ENCODE measurements at regions of chr16 and their contacts with region 1.

Region 1: DNA sequence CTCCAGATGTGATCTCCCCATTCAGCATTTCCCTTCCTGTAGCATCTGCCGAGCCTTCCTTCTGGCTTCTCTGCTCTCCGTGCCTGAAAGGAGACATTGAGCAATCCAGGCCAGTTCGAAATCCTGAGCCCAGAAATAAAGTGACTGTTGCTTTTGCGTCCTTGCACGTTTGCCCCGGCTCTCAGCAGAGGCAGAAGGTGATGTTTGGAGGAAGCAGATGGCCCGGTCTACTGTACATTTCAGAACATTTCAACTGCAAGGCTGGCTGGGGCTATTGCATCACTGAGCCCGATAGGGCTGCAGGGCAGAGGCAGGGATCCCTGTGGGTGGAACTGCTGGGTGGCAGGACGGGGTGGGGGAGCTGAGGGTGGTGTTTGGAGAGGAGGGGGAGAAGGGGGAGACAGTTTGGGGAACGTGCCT is 29.4 kb downstream of the IRF8 start:
- DNase-seq: peak; percentile 53
- ATAC-seq: peak; percentile 32
- H3K4me3 ChIP-seq: no peak overlapping the region
- H3K4me3 Mint-ChIP-seq: peak overlapping the region; percentile 72
- H3K27ac ChIP-seq: no peak overlapping the region
- H3K27ac Mint-ChIP-seq: peak overlapping the region; percentile 71
- H3K4me1 ChIP-seq: peaks cover 60 to 74% of the 10 kb centered on the region in 2 donors
- H3K4me1 Mint-ChIP-seq: peaks cover 82% of the 10 kb centered on the region
- H3K27me3 ChIP-seq: no peaks in the 10 kb centered on the region
- H3K27me3 Mint-ChIP-seq: no peaks in the 10 kb centered on the region
- CTCF ChIP-seq: no peak

Region 2: GRCh38 chr16:85878874-85879273 is 49.5 kb before region 1 on chr16:
- CTCF ChIA-PET with region 1: no interaction called
- POLR2A ChIA-PET with region 1: no interaction called
- intact Hi-C with region 1: no loop called
- DNase-seq: no peak
- ATAC-seq: no peak
- H3K4me3 ChIP-seq: no peak overlapping the region
- H3K4me3 Mint-ChIP-seq: no peak overlapping the region
- H3K27ac ChIP-seq: no peak overlapping the region
- H3K27ac Mint-ChIP-seq: peak overlapping the region; percentile 41
- H3K4me1 ChIP-seq: peaks cover under 1 to 7% of the 10 kb centered on the region in 2 donors
- H3K4me1 Mint-ChIP-seq: peaks cover 21% of the 10 kb centered on the region
- H3K27me3 ChIP-seq: no peaks in the 10 kb centered on the region
- H3K27me3 Mint-ChIP-seq: no peaks in the 10 kb centered on the region
- CTCF ChIP-seq: no peak

Region 3: DNA sequence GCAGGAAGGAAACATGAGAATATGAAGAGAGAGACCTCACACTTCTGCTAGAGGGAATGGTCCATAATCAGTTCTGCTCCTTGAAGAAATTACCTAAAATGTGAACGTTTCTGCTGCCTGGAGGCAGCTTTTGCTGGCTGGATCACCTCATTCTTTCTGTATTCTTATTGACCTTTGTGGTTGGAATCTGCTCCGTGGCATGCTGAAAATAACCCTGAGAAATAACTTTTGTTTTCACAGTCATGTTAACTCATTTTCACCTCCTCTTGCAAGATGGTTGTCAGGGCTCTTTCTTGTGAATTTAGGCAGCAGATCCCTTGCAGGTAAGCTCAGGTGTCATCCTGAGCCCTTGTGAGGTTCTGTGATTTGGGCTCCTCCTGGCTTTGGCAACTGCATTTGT is 40.7 kb after region 1 on chr16:
- CTCF ChIA-PET with region 1: no interaction called
- POLR2A ChIA-PET with region 1: no interaction called
- intact Hi-C with region 1: loop called (anchors 5 kb)
- DNase-seq: no peak
- ATAC-seq: no peak
- H3K4me3 ChIP-seq: no peak overlapping the region
- H3K4me3 Mint-ChIP-seq: peak overlapping the region; percentile 62
- H3K27ac ChIP-seq: no peak overlapping the region
- H3K27ac Mint-ChIP-seq: peak overlapping the region; percentile 3
- H3K4me1 ChIP-seq: peaks cover 26 to 38% of the 10 kb centered on the region in 2 donors
- H3K4me1 Mint-ChIP-seq: peaks cover 65% of the 10 kb centered on the region
- H3K27me3 ChIP-seq: no peaks in the 10 kb centered on the region
- H3K27me3 Mint-ChIP-seq: no peaks in the 10 kb centered on the region
- CTCF ChIP-seq: no peak